Activated CD4-positive, alpha-beta memory T cell treated with anti-CD3 and anti-CD28 coated beads for 36 hours (primary cell): ENCODE measurements at regions of chr9 and their contacts with region 1.

Region 1: DNA sequence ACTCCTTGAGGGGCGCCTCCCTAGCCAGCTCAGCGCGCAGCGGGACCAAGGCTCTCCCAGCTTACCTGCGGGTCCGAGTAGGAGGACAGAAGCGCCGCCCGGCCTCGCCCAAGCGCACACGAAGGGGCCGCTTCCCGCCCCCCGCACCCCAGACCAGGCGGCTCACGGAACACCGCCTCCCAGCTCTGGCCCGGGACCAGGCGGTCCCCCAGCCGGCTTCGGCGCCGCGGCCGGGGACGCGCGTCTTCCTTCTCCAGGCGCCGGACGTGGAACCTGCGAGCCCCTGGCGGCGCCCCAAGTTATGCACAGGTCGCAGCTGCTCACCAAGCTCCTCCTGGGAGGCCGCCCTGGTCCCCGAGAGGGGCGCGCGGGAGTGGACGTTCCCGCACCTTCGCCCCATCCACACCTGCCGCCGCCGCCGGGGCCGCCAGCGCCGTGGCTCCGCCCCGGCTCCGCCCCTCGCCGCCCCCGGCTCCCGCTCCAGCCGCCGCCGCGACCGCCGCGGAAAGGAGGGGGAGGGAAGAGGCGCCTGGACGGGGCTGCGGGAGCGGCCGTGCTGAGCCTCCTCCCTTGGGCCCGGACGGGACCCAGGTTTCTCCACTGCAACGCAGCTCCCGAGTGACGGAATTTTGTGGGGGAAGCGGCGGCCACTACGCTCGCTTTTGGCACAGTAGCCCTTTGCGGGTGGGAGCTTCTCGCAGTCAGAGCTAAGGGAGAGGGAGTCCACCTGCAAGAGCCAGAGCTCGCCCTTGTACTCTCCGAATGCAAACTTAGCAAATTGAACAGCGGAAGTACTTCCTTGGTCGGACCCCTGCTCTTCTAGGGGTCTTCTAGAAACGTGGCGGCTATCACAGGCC is 77.5 kb upstream of the IFNE start:
- DNase-seq: peak; percentile 54
- H3K4me3 Mint-ChIP-seq: peak overlapping the region; percentile 85
- H3K27ac Mint-ChIP-seq: no peak overlapping the region
- H3K4me1 Mint-ChIP-seq: peaks cover 27% of the 10 kb centered on the region
- H3K27me3 Mint-ChIP-seq: peaks cover 37% of the 10 kb centered on the region

Region 2: GRCh38 chr9:21402386-21403251 is 157.0 kb before region 1 on chr9:
- CTCF ChIA-PET with region 1: no interaction called
- POLR2A ChIA-PET with region 1: no interaction called
- intact Hi-C with region 1: no loop called
- DNase-seq: peak; percentile 28
- H3K4me3 Mint-ChIP-seq: peak overlapping the region; percentile 41
- H3K27ac Mint-ChIP-seq: no peak overlapping the region
- H3K4me1 Mint-ChIP-seq: peaks cover 5% of the 10 kb centered on the region
- H3K27me3 Mint-ChIP-seq: peaks cover 48% of the 10 kb centered on the region

Region 3: DNA sequence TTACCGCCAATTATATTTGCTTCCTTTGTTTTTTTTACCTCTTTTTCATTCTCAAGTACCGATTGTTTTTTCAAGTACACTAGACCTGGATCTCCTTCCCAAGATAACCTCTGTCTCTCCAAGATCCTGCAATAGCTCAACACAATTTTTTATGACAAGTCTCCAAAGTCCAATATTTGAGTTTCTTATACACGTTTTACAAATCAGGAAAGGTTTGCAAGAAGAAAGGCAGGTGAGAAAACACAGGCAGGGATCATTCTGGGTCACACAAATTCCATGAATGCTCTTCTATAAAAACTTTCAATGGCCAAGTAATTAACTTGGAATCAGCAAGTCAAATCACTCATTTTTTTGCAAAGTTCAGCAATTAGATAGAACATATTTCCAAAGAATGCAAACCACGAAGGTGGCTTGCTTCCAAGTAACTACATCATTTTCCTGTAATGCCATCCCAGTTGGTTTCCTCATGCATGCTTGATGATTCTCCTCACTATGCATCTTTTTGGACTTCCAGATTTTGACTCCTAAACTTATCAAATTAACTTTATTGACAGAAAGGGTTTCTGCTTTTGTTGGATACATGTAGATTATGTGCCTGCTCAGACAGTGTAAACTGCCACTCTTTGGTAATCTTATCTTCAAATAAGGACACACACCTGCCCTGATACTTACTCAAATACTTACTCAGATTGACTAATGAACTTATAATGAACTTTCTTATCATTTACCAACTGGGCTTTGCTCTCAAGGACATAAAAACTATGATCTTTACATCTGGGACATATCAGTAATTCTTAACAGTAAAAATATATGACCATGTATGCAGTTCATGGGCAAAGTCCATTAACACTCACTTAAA is 52.8 kb before region 1 on chr9:
- CTCF ChIA-PET with region 1: interaction called, 3 read pairs
- POLR2A ChIA-PET with region 1: interaction called, 4 read pairs
- intact Hi-C with region 1: loop called (anchors 10 kb)
- DNase-seq: no peak
- H3K4me3 Mint-ChIP-seq: no peak overlapping the region
- H3K27ac Mint-ChIP-seq: no peak overlapping the region
- H3K4me1 Mint-ChIP-seq: peaks cover 8% of the 10 kb centered on the region
- H3K27me3 Mint-ChIP-seq: peaks cover 4% of the 10 kb centered on the region

Region 4: DNA sequence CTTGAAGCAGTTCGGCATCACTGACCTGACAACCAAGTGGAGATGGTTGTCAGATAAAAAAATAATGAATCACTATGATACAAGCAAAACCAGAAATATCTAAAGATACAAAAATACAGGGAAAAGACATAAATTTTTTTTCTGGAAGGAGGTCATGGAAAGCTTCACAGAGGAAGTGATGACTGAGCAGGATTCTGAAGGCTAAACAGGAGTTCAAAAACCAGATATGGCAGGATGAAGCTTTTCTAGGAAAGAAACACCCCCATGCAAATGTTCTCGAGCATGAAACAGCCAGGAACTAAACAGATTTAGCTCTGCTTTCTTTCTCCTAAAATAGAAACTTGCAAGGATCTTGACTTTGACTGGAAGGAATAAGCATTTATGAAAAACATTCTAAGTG is 16.9 kb before region 1 on chr9:
- CTCF ChIA-PET with region 1: no interaction called
- POLR2A ChIA-PET with region 1: no interaction called
- intact Hi-C with region 1: no loop called
- DNase-seq: no peak
- H3K4me3 Mint-ChIP-seq: no peak overlapping the region
- H3K27ac Mint-ChIP-seq: no peak overlapping the region
- H3K4me1 Mint-ChIP-seq: peaks cover 1% of the 10 kb centered on the region
- H3K27me3 Mint-ChIP-seq: no peaks in the 10 kb centered on the region

Region 5: DNA sequence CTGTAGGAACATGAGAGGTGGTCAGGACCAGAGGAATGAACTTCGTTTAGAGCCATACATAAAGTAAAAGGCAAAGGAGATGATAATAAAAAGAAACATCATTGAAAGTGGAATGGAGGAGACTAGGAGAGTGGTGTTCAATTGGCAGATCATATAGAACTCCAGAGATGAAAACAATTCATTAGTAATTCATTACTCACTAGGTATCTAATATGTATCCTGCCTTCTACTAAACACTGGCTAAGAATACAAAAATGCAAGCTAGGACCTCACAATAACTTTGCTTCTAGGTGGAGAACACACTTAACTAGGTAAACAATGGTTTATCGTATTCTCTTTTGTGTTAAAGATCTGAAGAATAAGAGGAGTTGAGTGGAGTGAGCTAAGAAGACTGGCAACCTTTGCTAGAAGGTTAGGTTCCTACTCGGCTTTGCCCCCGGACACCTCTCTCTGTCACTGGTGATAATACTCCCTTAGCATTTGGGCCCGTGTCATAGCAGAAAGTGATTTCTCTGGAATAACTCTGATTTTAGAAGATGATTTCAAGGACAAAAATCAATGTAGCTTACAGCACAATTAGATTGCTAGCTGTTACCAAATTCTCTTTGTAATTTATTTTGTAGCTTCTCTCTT is 11.1 kb after region 1 on chr9:
- CTCF ChIA-PET with region 1: interaction called, 12 read pairs
- POLR2A ChIA-PET with region 1: no interaction called
- intact Hi-C with region 1: no loop called
- DNase-seq: no peak
- H3K4me3 Mint-ChIP-seq: no peak overlapping the region
- H3K27ac Mint-ChIP-seq: no peak overlapping the region
- H3K4me1 Mint-ChIP-seq: no peaks in the 10 kb centered on the region
- H3K27me3 Mint-ChIP-seq: peaks cover 9% of the 10 kb centered on the region